CD4-positive, alpha-beta memory T cell (primary cell): ENCODE measurements at regions of chr18 and their contacts with region 1.

Region 1: GRCh38 chr18:74495581-74496507 is at the start of gene CNDP2:
- DNase-seq: peak; percentile 96 to 97 (median 96)
- H3K4me3 ChIP-seq: peak within 1 kb of the TSS; percentile 61 to 82
- H3K4me3 Mint-ChIP-seq: peak within 1 kb of the TSS; percentile 94 to 99 (median 96)
- H3K27ac ChIP-seq: peak within 1 kb of the TSS; percentile 92
- H3K27ac Mint-ChIP-seq: peak within 1 kb of the TSS; percentile 90 to 99 (median 99)
- H3K4me1 ChIP-seq: peaks cover 37% of the 10 kb centered on the region
- H3K4me1 Mint-ChIP-seq: peaks cover 31 to 58% (median 41%) of the 10 kb centered on the region in 4 donors
- H3K27me3 ChIP-seq: no peaks in the 10 kb centered on the region
- H3K27me3 Mint-ChIP-seq: no peaks in the 10 kb centered on the region
- total RNA-seq, gene CNDP2: 145 to 153 TPM

Region 2: DNA sequence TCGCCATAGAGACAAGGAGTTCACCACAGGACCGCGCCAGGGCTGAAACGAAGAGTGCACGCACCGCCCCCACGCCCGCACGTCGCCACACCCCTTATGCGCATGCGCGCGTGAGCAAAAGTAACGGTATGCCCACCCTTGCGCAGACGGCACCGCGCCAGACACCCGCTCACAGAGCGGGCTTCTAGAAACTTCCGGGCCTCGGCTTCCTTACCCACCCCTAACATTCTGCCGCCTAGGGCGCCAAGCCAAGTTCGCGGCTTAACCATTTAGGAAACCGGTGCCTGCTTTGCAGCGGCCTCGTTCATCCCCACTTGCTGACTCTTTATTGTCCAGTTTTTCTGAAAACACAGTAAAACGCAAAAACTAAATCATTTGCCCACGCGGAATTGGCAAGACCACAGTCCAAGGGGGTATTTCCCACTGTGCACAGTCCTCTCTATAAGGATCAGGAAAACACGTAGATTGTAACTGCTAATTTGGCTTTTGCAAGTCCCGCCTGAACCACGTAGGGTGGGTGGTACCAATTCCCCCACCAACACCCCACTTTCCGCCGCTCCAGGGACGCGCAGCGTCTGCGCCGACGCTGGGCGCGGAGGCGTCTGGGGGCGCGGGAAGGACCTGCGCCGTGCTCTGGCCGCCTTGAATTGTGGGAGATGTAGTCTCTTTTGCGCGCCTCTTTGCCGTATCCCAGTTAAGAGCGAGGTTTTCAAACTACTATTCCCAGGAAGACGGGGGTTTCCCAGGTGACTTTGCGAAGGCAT is 347.9 kb before region 1 on chr18 and contains the starts of genes FBXO15 and TIMM21:
- CTCF ChIA-PET with region 1: interaction called, 3 read pairs
- POLR2A ChIA-PET with region 1: no interaction called
- intact Hi-C with region 1: loop called (anchors 1 kb)
- DNase-seq: peak; percentile 94 to 97 (median 96)
- H3K4me3 ChIP-seq: peak within 1 kb of the TSS; percentile 97 to 99
- H3K4me3 Mint-ChIP-seq: peak within 1 kb of the TSS; percentile 94 to 98 (median 95)
- H3K27ac ChIP-seq: peak within 1 kb of the TSS; percentile 92
- H3K27ac Mint-ChIP-seq: peak within 1 kb of the TSS; percentile 98 to 99 (median 99)
- H3K4me1 ChIP-seq: peaks cover 29% of the 10 kb centered on the region
- H3K4me1 Mint-ChIP-seq: peaks cover 27 to 55% (median 40%) of the 10 kb centered on the region in 4 donors
- H3K27me3 ChIP-seq: no peaks in the 10 kb centered on the region
- H3K27me3 Mint-ChIP-seq: no peaks in the 10 kb centered on the region
- total RNA-seq, gene FBXO15: 2.5 to 2.6 TPM
- total RNA-seq, gene TIMM21: 23.6 to 24.2 TPM

Region 3: DNA sequence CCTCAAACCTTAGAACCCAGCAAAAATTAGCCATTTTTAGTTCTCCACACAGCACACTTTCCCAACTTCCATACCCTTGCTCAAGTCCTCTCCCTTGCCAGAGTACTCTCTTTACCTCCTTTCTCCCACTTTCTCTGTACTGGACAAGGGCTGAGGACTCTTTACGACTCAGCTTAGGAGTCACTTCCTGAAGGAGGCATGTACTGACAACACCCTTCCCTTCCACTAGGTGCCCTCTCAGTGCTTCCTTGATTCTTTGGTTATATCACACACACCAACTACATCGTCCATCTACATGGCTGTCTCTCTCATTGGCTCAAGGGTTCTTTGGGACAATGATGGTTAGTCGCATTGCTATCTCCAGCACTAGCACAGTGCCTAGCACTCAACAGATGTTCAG is 185.4 kb before region 1 on chr18:
- CTCF ChIA-PET with region 1: interaction called, 28 read pairs
- POLR2A ChIA-PET with region 1: interaction called, 7 read pairs
- intact Hi-C with region 1: loop called (anchors 1 kb)
- DNase-seq: peak in 3 of 5 donors; percentile 6 to 18 (median 12)
- H3K4me3 ChIP-seq: no peak overlapping the region
- H3K4me3 Mint-ChIP-seq: no peak overlapping the region
- H3K27ac ChIP-seq: no peak overlapping the region
- H3K27ac Mint-ChIP-seq: no peak overlapping the region
- H3K4me1 ChIP-seq: no peaks in the 10 kb centered on the region
- H3K4me1 Mint-ChIP-seq: peaks cover 0 to 3% (median under 1%) of the 10 kb centered on the region in 4 donors
- H3K27me3 ChIP-seq: no peaks in the 10 kb centered on the region
- H3K27me3 Mint-ChIP-seq: peaks cover 21 to 30% of the 10 kb centered on the region in 2 donors

Region 4: GRCh38 chr18:74370115-74370514 is 125.7 kb before region 1 on chr18:
- CTCF ChIA-PET with region 1: interaction called, 124 read pairs
- POLR2A ChIA-PET with region 1: interaction called, 32 read pairs
- intact Hi-C with region 1: loop called (anchors 1 kb)
- DNase-seq: no peak
- H3K4me3 ChIP-seq: no peak overlapping the region
- H3K4me3 Mint-ChIP-seq: no peak overlapping the region
- H3K27ac ChIP-seq: no peak overlapping the region
- H3K27ac Mint-ChIP-seq: peak overlapping the region in 5 of 7 donors; percentile 25 to 89 (median 77)
- H3K4me1 ChIP-seq: peaks cover 34% of the 10 kb centered on the region
- H3K4me1 Mint-ChIP-seq: peaks cover 29 to 49% (median 39%) of the 10 kb centered on the region in 4 donors
- H3K27me3 ChIP-seq: no peaks in the 10 kb centered on the region
- H3K27me3 Mint-ChIP-seq: peaks cover 7 to 8% of the 10 kb centered on the region in 2 donors

Region 5: GRCh38 chr18:74551936-74552555 is 56.2 kb after region 1 on chr18:
- CTCF ChIA-PET with region 1: interaction called, 58 read pairs
- POLR2A ChIA-PET with region 1: no interaction called
- intact Hi-C with region 1: loop called (anchors 1 kb)
- DNase-seq: peak; percentile 62 to 73 (median 67)
- H3K4me3 ChIP-seq: no peak overlapping the region
- H3K4me3 Mint-ChIP-seq: no peak overlapping the region
- H3K27ac ChIP-seq: no peak overlapping the region
- H3K27ac Mint-ChIP-seq: no peak overlapping the region
- H3K4me1 ChIP-seq: no peaks in the 10 kb centered on the region
- H3K4me1 Mint-ChIP-seq: no peaks in the 10 kb centered on the region
- H3K27me3 ChIP-seq: no peaks in the 10 kb centered on the region
- H3K27me3 Mint-ChIP-seq: peaks cover 8 to 16% of the 10 kb centered on the region in 2 donors

Region 6: GRCh38 chr18:75070625-75071483 is 575.0 kb after region 1 on chr18:
- CTCF ChIA-PET with region 1: no interaction called
- POLR2A ChIA-PET with region 1: no interaction called
- intact Hi-C with region 1: loop called (anchors 2 kb)
- DNase-seq: peak; percentile 70 to 89 (median 74)
- H3K4me3 ChIP-seq: peak overlapping the region; percentile 51 to 58
- H3K4me3 Mint-ChIP-seq: peak overlapping the region; percentile 79 to 97 (median 90)
- H3K27ac ChIP-seq: peak overlapping the region; percentile 74
- H3K27ac Mint-ChIP-seq: peak overlapping the region; percentile 89 to 100 (median 99)
- H3K4me1 ChIP-seq: peaks cover 34% of the 10 kb centered on the region
- H3K4me1 Mint-ChIP-seq: peaks cover 35 to 57% (median 41%) of the 10 kb centered on the region in 4 donors
- H3K27me3 ChIP-seq: no peaks in the 10 kb centered on the region
- H3K27me3 Mint-ChIP-seq: no peaks in the 10 kb centered on the region